ENCODE measurements at regions of chr11 and their contacts with region 1.

Region 1: GRCh38 chr11:67507864-67508485 is at the start of gene CDK2AP2:
- DNase-seq: peak; percentile 97
- H3K4me3 Mint-ChIP-seq: peak within 1 kb of the TSS; percentile 92
- H3K27ac Mint-ChIP-seq: peak within 1 kb of the TSS; percentile 93
- H3K4me1 Mint-ChIP-seq: peaks cover 36% of the 10 kb centered on the region
- H3K27me3 Mint-ChIP-seq: no peaks in the 10 kb centered on the region
- total RNA-seq, gene CDK2AP2: 107 and 115 TPM in 2 replicates

Region 2: GRCh38 chr11:66958232-66958955 is 549.6 kb before region 1 on chr11 and contains the start of gene PC:
- intact Hi-C with region 1: loop called (anchors 1 kb)
- DNase-seq: peak; percentile 97
- H3K4me3 Mint-ChIP-seq: peak within 1 kb of the TSS; percentile 83
- H3K27ac Mint-ChIP-seq: peak within 1 kb of the TSS; percentile 90
- H3K4me1 Mint-ChIP-seq: peaks cover 29% of the 10 kb centered on the region
- H3K27me3 Mint-ChIP-seq: peaks cover 16% of the 10 kb centered on the region
- total RNA-seq, gene PC: 11.2 and 15.9 TPM in 2 replicates

Region 3: DNA sequence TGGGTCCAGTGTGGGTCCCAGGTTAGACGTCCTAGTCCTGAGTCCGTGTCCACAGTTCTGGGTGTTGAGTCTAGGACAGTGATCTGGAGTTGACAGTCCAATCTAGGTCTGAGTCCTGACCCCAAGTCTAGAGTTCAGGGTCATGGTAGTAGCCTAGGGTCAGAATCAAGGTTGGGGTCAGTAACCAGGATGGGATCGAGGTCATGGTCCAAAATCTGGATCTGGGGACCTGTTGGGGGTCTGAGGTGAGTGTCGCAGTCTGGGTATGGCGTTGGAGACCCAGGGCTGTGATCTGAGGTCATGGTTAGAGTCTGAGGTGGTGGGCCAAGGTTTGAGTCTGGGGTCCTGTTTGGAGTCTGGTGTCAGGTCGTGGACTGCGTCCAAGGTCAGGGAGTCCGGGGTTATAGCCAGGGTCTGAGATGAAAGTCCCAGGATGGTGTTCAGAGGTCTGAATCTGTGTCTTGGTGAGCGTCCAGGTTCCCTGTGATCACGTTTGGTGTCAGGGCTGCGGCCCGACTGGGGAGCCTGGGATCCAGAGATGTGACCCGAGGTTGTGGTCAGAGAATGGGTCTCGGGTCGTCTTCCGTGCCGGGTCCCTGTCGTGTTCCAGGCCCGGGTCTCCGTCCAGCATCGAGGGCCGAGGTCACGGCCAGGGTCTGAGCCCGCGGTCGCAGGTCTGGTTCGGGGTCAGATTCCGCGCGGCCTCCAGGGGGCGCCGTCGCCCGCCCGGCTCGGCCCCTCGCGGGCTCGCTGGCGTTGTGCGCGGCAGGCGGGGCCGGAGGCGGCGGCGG is 242.1 kb before region 1 on chr11:
- intact Hi-C with region 1: loop called (anchors 5 kb)
- DNase-seq: peak; percentile 76
- H3K4me3 Mint-ChIP-seq: peak overlapping the region; percentile 83
- H3K27ac Mint-ChIP-seq: peak overlapping the region; percentile 90
- H3K4me1 Mint-ChIP-seq: peaks cover 73% of the 10 kb centered on the region
- H3K27me3 Mint-ChIP-seq: no peaks in the 10 kb centered on the region

Region 4: GRCh38 chr11:67391304-67392132 is 116.5 kb before region 1 on chr11 and contains the start of gene RAD9A:
- intact Hi-C with region 1: loop called (anchors 1 kb)
- DNase-seq: peak; percentile 89
- H3K4me3 Mint-ChIP-seq: peak within 1 kb of the TSS; percentile 90
- H3K27ac Mint-ChIP-seq: peak within 1 kb of the TSS; percentile 67
- H3K4me1 Mint-ChIP-seq: peaks cover 35% of the 10 kb centered on the region
- H3K27me3 Mint-ChIP-seq: peaks cover 4% of the 10 kb centered on the region
- total RNA-seq, gene RAD9A: 30.7 and 31.6 TPM in 2 replicates

Region 5: DNA sequence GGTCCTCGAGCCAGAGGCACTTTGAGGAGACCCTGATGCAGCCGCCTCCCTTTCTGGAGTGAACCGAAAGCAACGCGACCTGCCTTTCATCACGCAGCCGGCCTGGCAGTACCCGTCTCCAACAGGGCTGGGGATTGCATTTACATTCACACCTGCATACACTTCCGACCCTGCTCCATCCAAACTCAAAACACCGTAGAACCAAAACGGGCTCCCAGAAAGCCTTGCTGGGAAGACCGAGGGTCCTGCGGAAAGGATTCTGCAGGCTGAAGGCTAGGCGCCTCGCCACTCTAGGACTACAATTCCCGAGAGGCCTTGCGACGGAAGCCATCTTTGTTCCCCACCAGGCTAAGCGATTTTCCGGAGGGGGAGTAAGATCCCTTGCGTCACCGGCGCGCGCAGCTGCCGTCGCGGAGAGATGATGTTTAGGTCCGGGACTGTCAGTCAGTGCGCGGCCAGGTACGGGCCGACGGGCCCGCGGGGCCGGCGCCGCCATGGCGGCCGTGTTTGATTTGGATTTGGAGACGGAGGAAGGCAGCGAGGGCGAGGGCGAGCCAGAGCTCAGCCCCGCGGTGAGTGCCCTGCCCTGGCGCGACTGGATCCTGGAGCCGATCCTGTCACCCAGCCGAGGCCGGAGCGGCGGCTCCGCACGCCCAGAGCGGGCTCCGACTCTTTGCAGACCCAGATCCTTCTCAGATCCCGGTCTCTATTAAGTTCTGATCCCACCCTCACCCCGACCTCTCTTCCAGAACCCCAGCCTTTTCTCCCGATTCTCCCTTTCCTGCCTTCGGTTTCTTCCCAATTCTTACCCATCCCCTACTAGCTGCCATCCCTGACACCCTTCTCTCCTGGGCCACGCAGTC is 79.7 kb before region 1 on chr11 and contains the start of gene RPS6KB2:
- intact Hi-C with region 1: loop called (anchors 1 kb)
- DNase-seq: peak; percentile 98
- H3K4me3 Mint-ChIP-seq: peak within 1 kb of the TSS; percentile 98
- H3K27ac Mint-ChIP-seq: peak within 1 kb of the TSS; percentile 97
- H3K4me1 Mint-ChIP-seq: peaks cover 27% of the 10 kb centered on the region
- H3K27me3 Mint-ChIP-seq: no peaks in the 10 kb centered on the region
- total RNA-seq, gene RPS6KB2: 84.1 and 86.2 TPM in 2 replicates

Region 6: DNA sequence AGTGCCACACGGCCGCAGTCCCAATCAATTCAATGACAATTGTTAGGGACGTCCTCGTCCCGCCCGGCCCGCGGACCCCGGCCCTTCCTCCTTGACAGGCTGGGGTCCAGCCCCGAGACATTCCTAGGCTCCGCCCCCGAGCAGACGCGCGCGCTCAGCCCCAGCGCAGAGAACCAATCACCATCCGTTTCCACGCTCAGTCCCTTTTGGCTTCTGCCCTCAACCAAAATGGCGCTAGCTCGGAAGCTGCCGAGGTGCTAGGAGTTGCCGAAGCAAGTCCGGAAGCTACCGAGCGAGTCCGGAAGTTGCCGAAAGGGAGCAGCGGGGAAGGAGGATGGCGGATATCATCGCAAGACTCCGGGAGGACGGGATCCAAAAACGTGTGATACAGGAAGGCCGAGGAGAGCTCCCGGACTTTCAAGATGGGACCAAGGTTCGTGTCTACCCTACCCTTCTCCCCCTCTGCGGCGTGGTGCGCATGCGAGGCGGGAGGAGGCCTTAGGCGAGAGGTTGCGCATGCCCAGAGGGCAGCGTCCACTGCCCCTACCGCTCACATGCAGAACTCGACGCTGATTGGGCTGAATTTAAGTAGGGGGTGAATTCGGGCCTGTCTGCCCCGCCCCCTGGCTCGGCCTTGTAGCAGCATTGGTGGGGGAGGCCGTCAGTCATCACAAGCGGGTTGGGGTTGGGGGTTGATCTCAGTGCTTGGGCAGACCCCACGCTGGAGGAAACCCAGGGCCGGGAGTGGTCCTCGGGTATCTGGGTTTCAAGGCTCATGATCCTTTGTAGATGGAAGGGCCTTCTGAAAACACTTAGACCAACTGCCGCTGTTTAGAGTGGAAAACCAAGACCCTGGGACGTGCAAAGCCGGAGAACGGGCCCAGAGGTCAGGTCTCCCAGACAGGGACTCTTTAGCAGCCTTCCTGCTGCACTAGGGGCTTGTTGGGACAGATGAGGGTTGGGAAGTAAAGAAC is 24.9 kb before region 1 on chr11 and contains the start of gene AIP:
- intact Hi-C with region 1: loop called (anchors 1 kb)
- DNase-seq: peak; percentile 98
- H3K4me3 Mint-ChIP-seq: peak within 1 kb of the TSS; percentile 94
- H3K27ac Mint-ChIP-seq: peak within 1 kb of the TSS; percentile 100
- H3K4me1 Mint-ChIP-seq: peaks cover 55% of the 10 kb centered on the region
- H3K27me3 Mint-ChIP-seq: peaks cover 4% of the 10 kb centered on the region
- total RNA-seq, gene AIP: 200 and 203 TPM in 2 replicates

Region 7: GRCh38 chr11:67523556-67524479 is 15.8 kb after region 1 on chr11:
- intact Hi-C with region 1: no loop called
- DNase-seq: no peak
- H3K4me3 Mint-ChIP-seq: no peak overlapping the region
- H3K27ac Mint-ChIP-seq: no peak overlapping the region
- H3K4me1 Mint-ChIP-seq: no peaks in the 10 kb centered on the region
- H3K27me3 Mint-ChIP-seq: no peaks in the 10 kb centered on the region

Region 8: GRCh38 chr11:68030318-68031138 is 522.6 kb after region 1 on chr11 and contains the start of gene NDUFS8:
- intact Hi-C with region 1: loop called (anchors 1 kb)
- DNase-seq: peak; percentile 96
- H3K4me3 Mint-ChIP-seq: peak within 1 kb of the TSS; percentile 92
- H3K27ac Mint-ChIP-seq: peak within 1 kb of the TSS; percentile 82
- H3K4me1 Mint-ChIP-seq: peaks cover 20% of the 10 kb centered on the region
- H3K27me3 Mint-ChIP-seq: peaks cover 1% of the 10 kb centered on the region
- total RNA-seq, gene NDUFS8: 137 and 144 TPM in 2 replicates